GM10248 (cell line): ENCODE measurements at regions of chr1 and their contacts with region 1.

Region 1: DNA sequence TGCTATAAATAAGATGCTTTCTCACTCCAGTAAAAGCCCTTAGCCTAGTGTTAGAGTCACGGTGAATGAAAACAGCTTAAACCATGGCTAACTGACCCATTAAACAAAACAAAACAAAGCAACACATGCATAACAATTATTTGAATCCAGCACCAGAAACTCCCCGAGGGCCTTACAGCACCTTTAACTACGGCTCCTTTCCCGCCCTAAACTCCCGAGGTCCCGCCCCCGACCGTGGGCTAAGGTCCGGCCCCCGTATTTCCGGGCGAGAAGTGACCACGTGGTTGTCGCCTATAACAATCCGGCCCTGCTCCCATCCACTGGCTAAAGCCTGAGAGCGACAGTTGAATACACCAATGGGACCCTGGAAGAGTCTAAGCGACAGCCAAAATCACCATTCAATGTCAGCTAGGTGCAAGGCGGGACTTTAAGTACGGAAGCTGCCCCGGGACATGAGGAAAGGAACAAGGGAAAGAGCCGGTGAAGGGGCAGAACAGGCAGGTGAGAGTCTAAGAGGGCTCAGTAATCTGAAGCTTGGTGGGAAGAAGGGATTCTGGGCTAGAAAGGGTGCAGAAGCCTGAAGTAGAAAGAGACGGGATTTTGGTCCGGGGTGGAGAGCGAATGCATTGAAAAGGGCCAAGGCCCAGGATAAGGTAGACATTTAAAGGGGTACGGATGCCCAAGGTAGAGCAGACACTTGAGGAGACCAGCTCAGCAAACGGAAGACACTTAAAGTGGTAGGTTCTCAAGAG is at the start of gene FLAD1:
- DNase-seq: peak; percentile 98
- CTCF ChIP-seq: no peak

Region 2: GRCh38 chr1:155001675-155002463 is 18.8 kb after region 1 on chr1:
- CTCF ChIA-PET with region 1: interaction called, 48 read pairs
- POLR2A ChIA-PET with region 1: interaction called, 4 read pairs
- DNase-seq: peak; percentile 99
- CTCF ChIP-seq: peak; percentile 45